ENCODE measurements at regions of chr2 and their contacts with region 1.

Region 1: DNA sequence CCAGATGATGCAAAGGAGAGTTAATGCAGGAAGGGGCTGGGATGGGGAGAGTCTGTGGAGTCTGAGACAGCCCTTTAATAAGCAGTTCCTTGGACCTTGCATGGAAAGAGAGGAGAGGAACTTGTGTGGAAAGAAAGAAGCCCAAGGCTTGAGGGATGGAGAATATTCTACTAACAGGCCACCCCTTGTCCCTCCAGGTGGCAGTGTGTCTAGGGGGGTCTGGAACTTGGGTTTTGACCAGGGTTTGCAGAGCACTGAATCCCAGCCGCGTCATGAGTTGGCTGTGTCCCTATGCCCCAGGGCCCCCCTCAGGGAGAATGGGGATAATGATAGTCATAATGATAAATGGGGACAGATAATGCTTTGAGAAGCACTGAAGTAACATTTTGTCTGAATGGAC is 15.0 kb downstream of the TCF7L1 start:
- DNase-seq: no peak
- H3K4me3 ChIP-seq: no peak overlapping the region
- CTCF ChIP-seq: no peak

Region 2: DNA sequence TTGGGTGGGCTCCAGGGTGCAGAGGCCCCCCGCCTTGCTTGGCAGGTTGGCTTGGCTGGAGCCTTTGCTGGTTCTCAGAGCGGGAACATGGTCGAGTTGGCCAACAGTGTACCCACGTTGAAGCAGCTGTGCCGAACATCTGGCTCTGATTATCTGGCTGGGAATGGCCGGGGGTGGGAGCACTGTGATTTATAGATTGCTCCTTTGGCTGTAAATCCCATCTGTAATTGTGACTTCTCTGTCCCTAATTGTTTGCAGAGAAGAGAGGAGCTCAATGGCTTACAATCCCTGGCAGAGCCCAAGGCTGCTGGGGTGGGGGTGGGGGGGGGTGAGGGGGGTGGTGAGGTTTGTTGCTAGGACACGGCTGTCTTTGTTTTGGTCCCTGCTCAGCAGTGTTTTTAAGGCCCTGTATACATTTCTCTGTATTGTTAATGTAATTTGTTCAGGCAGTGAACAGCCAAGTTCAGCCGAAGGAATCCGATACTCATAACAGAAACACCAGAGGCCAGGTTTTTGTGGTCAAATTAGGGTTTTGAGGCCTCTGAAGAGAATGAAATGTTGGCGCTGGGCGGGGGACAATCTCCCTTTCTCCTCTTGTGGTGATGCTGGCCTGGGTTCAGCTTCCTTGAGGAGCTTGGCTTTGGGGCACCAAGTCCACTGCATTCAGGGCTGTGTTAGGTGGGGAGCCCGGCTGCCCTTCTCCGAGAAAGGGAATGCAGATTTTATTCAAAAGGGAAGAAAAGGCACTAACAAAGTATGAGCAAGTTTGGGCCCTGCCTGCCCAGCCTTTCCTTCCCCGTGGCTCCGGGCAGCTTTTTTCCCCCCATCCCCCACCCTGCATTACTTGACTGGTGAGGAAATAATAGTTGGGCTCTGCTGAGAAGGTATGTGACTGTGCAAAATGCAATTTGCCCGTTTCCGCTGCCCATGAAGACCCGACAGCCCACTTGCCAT is 67.5 kb after region 1 on chr2:
- in situ Hi-C with region 1: loop called (anchors 5 kb)
- DNase-seq: peak; percentile 99
- H3K4me3 ChIP-seq: peak overlapping the region; percentile 12
- CTCF ChIP-seq: no peak

Region 3: DNA sequence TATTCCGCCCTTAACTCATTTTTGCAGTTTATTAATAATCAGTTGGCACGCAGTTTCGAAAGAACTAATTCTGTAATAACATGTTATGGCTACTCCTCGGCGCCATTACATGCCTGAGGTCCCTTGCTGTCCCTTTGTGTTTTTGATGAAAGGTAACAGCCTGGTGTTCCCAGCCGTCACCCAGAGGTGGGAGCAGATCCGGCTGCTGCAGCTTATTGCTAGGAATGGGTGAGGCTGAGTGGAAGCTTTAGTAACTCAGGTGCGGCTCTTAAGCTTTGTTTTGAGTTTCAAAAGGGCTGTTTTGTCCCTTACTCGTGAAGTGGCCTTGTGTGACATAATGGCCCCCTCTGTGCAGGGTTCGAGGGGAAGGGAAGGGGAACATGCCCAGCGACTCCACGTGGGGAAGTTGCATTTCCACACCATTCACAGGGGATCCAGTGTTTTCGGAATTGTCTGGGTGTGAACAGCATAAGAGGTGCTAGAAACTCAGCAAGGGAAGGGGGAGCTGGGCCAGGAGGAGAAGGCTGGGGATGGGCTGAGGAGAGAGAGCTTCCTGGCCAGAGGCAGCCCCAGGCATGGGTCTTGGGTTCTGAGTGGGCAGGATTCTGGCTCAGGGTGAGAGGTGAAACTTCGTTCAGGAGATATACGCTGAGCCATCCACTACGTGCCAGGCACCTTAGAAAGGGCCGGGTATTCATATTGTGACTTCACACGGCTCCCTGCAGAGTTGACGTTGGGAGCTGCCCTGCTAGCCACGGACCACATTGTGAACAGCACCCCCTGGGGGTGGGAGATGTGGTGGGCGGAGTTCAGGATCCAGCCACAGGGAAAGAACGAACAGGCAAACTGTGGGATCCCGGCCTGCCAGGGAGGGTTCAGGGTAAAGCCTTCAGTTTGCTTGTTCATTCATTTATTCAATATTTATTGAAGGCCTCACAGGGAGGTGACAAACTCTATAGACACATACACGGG is 95.2 kb after region 1 on chr2:
- in situ Hi-C with region 1: loop called (anchors 5 kb)
- DNase-seq: no peak
- H3K4me3 ChIP-seq: no peak overlapping the region
- CTCF ChIP-seq: peak; percentile 47